ENCODE measurements at regions of chr4 and their contacts with region 1.

Region 1: GRCh38 chr4:86043755-86044592 is 315.9 kb downstream of the MAPK10 start:
- DNase-seq: no peak

Region 2: GRCh38 chr4:85084380-85085094 is 959.4 kb before region 1 on chr4:
- intact Hi-C with region 1: loop called (anchors 5 kb)
- DNase-seq: no peak

Region 3: GRCh38 chr4:85147439-85148076 is 896.4 kb before region 1 on chr4:
- intact Hi-C with region 1: loop called (anchors 5 kb)
- DNase-seq: no peak

Region 4: DNA sequence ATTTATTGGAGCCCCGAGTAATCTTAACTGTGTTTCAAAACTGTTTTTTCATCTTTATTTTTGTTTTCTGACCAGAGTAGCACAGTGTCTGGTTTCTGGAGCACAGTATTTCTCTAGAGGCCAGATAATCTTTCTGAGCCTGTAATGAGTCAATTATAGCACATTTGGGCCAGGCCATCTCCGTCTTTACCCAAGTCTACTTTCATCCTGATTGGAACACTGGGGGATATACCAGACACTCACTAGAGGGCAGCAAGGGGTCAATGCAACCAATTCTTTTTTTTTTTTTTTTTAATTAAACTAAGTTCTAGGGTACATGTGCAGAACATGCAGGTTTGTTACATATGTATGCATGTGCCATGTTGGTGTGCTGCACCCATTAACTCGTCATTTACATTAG is 287.0 kb before region 1 on chr4:
- intact Hi-C with region 1: loop called (anchors 10 kb)
- DNase-seq: no peak

Region 5: DNA sequence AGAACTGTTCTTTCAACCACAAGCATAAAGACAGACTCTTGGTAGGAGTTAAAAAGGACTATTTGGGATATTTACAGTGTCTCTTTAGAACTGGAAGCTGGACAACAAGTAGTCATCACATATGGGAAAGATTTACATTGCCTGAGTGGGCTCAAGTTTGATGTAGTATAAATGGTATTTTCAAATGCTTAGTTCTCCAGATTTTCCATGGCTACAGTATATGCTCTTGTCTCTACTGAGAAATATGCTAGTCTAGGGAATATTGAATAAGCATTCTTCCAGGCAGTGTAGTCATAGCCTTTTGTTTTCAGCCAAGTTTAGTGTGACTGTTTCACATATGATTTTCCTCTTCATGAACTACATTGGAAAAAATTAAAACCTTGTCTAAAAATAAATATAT is 253.4 kb before region 1 on chr4:
- intact Hi-C with region 1: loop called (anchors 10 kb)
- DNase-seq: no peak

Region 6: GRCh38 chr4:85968945-85969819 is 74.8 kb before region 1 on chr4:
- intact Hi-C with region 1: loop called (anchors 5 kb)
- DNase-seq: no peak